Endothelial cell of umbilical vein (primary cell): ENCODE measurements at regions of chr20 and their contacts with region 1.

Region 1: DNA sequence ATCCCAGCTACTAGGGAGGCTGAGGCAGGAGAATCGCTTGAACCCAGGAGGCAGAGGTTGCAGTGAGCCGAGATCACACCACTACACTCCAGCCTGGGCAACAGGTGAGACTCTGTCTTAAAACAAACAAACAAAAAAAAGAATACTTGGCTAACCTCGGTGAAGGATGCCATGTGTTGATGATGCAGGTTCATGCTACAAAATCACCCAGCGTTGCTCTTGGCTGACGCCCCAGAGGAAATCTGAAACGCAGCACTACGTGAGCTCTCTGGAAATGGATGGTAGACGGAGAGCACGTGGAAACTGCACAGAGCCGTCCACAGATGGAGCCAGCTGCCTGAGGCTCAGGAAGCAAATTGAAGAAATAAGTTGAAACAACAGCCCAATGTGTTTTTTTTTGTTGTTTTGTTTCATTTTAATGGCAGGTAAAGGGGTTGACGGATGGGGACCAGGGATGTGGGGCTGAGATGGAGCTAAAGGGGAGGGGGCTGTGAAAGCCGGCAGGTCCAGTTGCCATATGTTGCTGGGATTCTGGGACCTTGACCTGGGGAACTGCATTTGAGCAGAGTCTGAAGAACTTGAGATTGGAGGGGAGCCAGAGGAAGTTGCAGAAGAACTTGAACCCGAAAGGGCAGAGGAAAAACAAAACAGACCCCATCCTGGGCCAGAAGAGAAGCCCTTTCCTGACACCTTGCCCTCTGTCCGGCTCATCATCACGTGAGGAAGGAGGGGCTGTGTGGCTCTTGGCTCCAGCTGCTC is 12.8 kb upstream of the MANBAL start:
- DNase-seq: peak; percentile 75
- H3K4me3 ChIP-seq: no peak overlapping the region
- H3K27ac ChIP-seq: no peak overlapping the region
- H3K4me1 ChIP-seq: peaks cover 9% of the 10 kb centered on the region
- H3K27me3 ChIP-seq: peaks cover 0 to 2% of the 10 kb centered on the region in 2 experiments
- CTCF ChIP-seq: peak; percentile 21 to 22
- POLR2A ChIP-seq: no peak

Region 2: DNA sequence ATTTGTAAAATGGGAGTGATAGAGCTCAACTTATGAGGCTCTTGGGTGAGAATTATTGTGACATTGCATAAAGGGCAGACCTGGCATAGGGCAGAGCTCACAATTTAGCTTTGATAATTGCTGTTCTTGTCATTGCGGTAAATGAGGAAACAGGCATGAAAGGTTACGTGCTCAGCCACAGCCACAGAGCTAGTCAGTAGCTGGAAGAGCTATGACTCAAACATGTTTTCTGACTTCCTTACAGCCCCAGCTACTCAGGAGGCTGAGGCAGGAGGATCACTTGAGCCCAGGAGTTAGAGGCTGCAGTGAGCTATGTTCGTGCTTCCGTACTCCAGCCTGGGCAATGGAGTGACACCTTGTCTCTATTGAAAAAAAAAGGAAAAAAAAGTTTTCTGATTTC is 11.5 kb before region 1 on chr20:
- CTCF ChIA-PET with region 1: interaction called, 16 read pairs
- POLR2A ChIA-PET with region 1: interaction called, 3 read pairs
- dilution Hi-C with region 1: no loop called
- intact Hi-C with region 1: no loop called
- DNase-seq: no peak
- H3K4me3 ChIP-seq: no peak overlapping the region
- H3K27ac ChIP-seq: no peak overlapping the region
- H3K4me1 ChIP-seq: no peaks in the 10 kb centered on the region
- H3K27me3 ChIP-seq: peaks cover 5 to 7% of the 10 kb centered on the region in 2 experiments
- CTCF ChIP-seq: no peak
- POLR2A ChIP-seq: no peak

Region 3: GRCh38 chr20:37288091-37288490 is 11.4 kb after region 1 on chr20:
- CTCF ChIA-PET with region 1: interaction called, 22 read pairs
- POLR2A ChIA-PET with region 1: interaction called, 3 read pairs
- dilution Hi-C with region 1: no loop called
- intact Hi-C with region 1: no loop called
- DNase-seq: no peak
- H3K4me3 ChIP-seq: no peak overlapping the region
- H3K27ac ChIP-seq: no peak overlapping the region
- H3K4me1 ChIP-seq: peaks cover 2% of the 10 kb centered on the region
- H3K27me3 ChIP-seq: peaks cover 0 to 8% of the 10 kb centered on the region in 2 experiments
- CTCF ChIP-seq: no peak
- POLR2A ChIP-seq: no peak

Region 4: DNA sequence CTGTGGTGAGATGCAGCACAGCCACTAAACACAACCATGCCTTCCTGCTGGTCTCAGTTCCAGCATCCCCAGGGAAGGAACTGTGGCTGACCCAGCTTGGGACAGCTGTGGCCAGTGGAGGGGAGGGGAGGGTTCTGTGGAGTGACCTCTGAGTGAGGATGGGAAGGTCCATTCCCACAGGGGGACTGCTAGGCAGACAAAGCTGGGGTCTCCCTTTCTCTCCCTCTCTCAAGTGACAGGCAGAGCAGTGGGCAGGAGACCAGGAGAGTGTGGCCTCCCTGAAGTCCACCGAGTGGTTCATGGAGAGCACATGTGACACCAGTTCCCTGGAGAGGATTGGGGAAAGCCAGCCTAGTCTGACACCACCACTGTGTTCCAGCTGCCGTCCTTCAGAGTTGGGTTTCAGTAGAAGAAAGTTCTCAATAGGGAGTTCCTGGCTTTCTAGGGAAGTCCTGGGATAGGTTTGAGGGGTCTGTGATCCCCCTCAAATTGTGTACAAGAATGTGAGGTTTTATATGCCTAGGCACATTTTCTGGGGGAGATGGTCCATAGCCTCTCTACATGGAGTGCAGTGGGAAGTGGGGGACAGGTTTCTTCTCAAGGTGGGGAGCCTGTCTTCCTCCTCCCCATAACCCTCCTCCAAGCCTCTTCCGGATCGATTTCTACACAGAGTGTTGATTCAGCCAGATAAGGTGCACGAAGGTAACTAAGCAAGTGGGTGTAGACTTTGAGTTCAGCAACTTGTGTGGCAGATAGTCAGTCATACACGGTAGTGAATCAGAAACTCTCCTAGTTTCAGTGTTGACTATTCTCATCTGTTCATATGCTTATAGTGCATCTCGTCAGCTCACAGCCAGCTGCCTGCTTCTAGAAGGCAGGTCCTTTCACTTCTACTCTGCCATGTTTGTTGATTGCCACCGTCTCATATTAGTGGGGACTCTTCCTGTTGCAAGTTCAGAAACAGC is 31.7 kb after region 1 on chr20:
- CTCF ChIA-PET with region 1: no interaction called
- POLR2A ChIA-PET with region 1: no interaction called
- dilution Hi-C with region 1: no loop called
- intact Hi-C with region 1: no loop called
- DNase-seq: no peak
- H3K4me3 ChIP-seq: no peak overlapping the region
- H3K27ac ChIP-seq: no peak overlapping the region
- H3K4me1 ChIP-seq: no peaks in the 10 kb centered on the region
- H3K27me3 ChIP-seq: no peaks in the 10 kb centered on the region
- CTCF ChIP-seq: no peak
- POLR2A ChIP-seq: no peak

Region 5: DNA sequence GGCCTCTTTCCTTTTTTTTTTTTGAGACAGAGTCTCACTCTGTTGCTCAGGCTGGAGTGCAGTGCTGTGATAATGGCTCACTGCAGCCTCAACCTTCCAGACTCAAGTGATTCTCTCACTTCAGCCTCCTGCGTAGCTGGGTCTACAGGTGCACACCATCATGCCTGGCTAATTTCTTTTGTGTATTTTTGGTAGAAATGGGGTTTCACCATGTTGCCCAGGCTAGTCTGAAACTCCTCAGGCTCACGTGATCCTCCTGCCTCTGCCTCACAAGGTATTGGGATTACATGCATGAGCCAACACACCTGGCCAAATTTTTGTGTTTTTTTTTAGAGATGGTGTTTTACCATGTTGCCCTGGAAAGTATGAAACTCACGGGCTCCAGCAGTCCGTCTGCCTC is 98.6 kb after region 1 on chr20:
- CTCF ChIA-PET with region 1: interaction called, 10 read pairs
- POLR2A ChIA-PET with region 1: no interaction called
- dilution Hi-C with region 1: no loop called
- intact Hi-C with region 1: no loop called
- DNase-seq: no peak
- H3K4me3 ChIP-seq: no peak overlapping the region
- H3K27ac ChIP-seq: no peak overlapping the region
- H3K4me1 ChIP-seq: peaks cover 18% of the 10 kb centered on the region
- H3K27me3 ChIP-seq: no peaks in the 10 kb centered on the region
- CTCF ChIP-seq: no peak
- POLR2A ChIP-seq: no peak

Region 6: DNA sequence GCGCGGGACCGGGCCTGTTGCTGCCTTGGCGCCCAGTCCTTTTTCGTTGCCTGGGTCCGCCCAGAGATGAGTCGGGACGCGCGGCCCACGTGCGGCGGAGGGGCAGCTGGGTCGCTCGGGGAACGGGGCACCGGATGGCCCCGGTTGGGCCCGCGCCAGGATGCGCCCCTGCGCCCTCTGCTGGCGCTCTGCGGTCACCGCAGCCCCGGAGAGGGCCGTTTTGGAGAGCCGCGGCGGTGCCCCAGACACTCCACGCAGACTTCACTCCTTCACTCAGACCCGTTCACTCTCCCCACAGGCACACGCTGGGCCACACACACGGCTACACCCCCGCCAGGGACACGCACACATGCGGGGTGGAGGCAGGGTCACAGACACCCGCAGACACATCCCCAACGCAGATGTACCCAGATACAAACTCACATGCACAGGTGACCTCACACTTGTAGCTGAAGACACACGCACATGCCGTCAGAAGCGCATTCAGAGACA is 108.1 kb after region 1 on chr20:
- CTCF ChIA-PET with region 1: interaction called, 32 read pairs
- POLR2A ChIA-PET with region 1: no interaction called
- dilution Hi-C with region 1: no loop called
- intact Hi-C with region 1: no loop called
- DNase-seq: peak; percentile 39
- H3K4me3 ChIP-seq: peak overlapping the region in 1 of 3 experiments; percentile 38
- H3K27ac ChIP-seq: no peak overlapping the region
- H3K4me1 ChIP-seq: peaks cover 16% of the 10 kb centered on the region
- H3K27me3 ChIP-seq: no peaks in the 10 kb centered on the region
- CTCF ChIP-seq: peak; percentile 91 to 95
- POLR2A ChIP-seq: no peak

Region 7: DNA sequence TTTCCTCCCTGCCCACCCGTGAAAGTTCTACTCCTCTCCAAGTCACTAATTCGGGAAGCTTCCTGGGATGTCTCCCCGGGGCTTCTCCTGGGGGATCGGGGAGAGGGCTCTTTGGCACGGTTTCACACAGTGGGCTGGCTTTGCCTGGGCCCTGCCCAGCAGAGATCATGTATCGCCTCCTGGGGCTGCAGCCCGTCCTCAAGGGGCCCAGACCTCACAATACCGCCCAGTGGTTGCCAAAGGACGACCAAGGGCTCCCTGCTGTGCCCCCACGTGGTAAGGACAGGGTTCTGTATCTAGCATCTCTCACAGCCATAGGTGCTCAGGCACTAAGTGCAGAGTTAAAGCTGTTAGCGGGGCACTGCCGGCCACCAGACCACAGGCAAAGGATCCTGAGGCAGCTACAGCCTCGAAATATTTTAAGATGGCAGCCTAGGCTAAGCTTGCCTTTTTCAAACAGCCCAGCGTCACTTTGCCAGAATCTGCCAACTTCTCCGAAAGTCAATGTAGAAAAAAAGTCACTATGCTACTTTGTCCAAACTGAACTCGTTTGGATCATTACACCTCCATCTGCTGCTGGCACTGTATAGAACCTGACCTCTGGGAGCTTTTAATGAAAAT is 242.9 kb after region 1 on chr20:
- CTCF ChIA-PET with region 1: interaction called, 13 read pairs
- POLR2A ChIA-PET with region 1: no interaction called
- dilution Hi-C with region 1: loop called (anchors 25 kb)
- intact Hi-C with region 1: no loop called
- DNase-seq: peak; percentile 41
- H3K4me3 ChIP-seq: no peak overlapping the region
- H3K27ac ChIP-seq: peak overlapping the region; percentile 1
- H3K4me1 ChIP-seq: peaks cover 27% of the 10 kb centered on the region
- H3K27me3 ChIP-seq: no peaks in the 10 kb centered on the region
- CTCF ChIP-seq: peak in 1 of 2 donors; percentile 14
- POLR2A ChIP-seq: no peak